Left ventricle myocardium superior (tissue), 1 donor: ENCODE measurements at regions of chr13 and their contacts with region 1.

Region 1: GRCh38 chr13:59391696-59392095 is 772.0 kb downstream of the DIAPH3 start:
- DNase-seq: no peak
- ATAC-seq: peak; percentile 78

Region 2: GRCh38 chr13:59477011-59477410 is 85.3 kb after region 1 on chr13:
- intact Hi-C with region 1: loop called (anchors 10 kb)
- DNase-seq: no peak
- ATAC-seq: no peak

Region 3: DNA sequence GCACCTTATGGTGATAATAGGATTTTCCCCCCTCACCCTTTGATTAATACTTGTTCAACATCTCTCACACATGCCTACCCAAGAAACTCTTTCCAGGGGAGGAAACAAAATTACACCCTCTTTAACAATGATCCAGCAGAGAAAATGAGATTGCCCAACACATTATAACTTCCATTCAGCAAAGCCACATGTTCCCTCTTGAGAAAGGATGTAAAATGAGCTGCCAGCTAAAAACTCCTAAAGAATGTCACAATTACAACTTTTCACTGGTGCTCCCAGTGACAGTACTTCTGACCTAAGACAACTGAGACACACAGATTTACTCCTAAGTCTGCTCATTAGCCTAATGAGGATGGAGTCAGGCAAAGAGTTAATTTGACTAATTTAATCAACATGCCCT is 150.6 kb after region 1 on chr13:
- intact Hi-C with region 1: no loop called
- DNase-seq: no peak
- ATAC-seq: no peak

Region 4: GRCh38 chr13:59601993-59602392 is 210.3 kb after region 1 on chr13:
- intact Hi-C with region 1: no loop called
- DNase-seq: no peak
- ATAC-seq: no peak

Region 5: GRCh38 chr13:59677966-59678814 is 286.5 kb after region 1 on chr13:
- intact Hi-C with region 1: loop called (anchors 5 kb)
- DNase-seq: no peak
- ATAC-seq: peak; percentile 97

Region 6: GRCh38 chr13:59766233-59766632 is 374.5 kb after region 1 on chr13:
- intact Hi-C with region 1: loop called (anchors 10 kb)
- DNase-seq: no peak
- ATAC-seq: no peak